ENCODE measurements at regions of chr13 and their contacts with region 1.

Region 1: GRCh38 chr13:106129273-106129672 is 406.2 kb downstream of the EFNB2 start:
- DNase-seq: no peak
- ATAC-seq: no peak
- H3K4me3 Mint-ChIP-seq: no peak overlapping the region
- H3K27ac Mint-ChIP-seq: no peak overlapping the region
- H3K4me1 Mint-ChIP-seq: no peaks in the 10 kb centered on the region
- H3K27me3 Mint-ChIP-seq: peaks cover 2% of the 10 kb centered on the region

Region 2: GRCh38 chr13:105863300-105863920 is 265.9 kb before region 1 on chr13:
- CTCF ChIA-PET with region 1: no interaction called
- POLR2A ChIA-PET with region 1: no interaction called
- intact Hi-C with region 1: loop called in 1 of 2 experiments (anchors 10 kb)
- DNase-seq: no peak
- ATAC-seq: no peak
- H3K4me3 Mint-ChIP-seq: no peak overlapping the region
- H3K27ac Mint-ChIP-seq: no peak overlapping the region
- H3K4me1 Mint-ChIP-seq: no peaks in the 10 kb centered on the region
- H3K27me3 Mint-ChIP-seq: no peaks in the 10 kb centered on the region

Region 3: GRCh38 chr13:106052200-106052767 is 77.0 kb before region 1 on chr13:
- CTCF ChIA-PET with region 1: no interaction called
- POLR2A ChIA-PET with region 1: no interaction called
- intact Hi-C with region 1: no loop called
- DNase-seq: no peak
- ATAC-seq: no peak
- H3K4me3 Mint-ChIP-seq: no peak overlapping the region
- H3K27ac Mint-ChIP-seq: no peak overlapping the region
- H3K4me1 Mint-ChIP-seq: no peaks in the 10 kb centered on the region
- H3K27me3 Mint-ChIP-seq: peaks cover 5% of the 10 kb centered on the region

Region 4: DNA sequence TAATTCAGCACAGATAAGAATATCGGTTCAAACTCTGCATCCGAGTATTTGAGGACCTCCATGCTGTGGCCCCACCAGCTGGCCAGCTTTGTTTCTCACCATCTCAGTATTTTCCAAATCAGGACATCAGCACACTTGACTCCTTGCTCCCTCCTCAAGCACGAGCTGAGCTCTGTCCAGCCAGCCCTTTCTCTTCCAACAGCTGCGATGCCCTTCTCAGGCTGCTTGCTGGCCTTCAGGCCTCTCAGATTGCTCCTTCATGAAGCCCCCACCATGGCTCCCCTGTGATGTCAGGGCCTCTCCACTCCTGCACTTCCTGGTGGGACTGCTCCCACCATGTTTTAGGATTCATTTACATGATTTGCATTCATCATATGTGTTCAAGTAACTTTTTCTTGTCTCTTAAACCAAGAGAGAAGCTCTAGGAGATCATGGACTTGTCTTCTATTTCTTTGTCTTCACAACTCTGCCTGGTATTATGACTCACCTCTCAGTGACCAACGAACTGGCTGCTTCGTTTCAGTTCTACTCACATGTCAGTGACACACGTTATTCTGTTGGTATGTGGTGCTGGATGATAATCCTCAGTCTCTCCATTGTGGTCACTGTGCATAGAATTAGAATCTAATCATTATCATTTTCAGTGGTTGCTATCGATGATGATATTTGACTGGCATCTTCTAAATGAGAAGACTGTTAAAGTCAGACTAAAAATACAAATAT is 65.5 kb before region 1 on chr13:
- CTCF ChIA-PET with region 1: no interaction called
- POLR2A ChIA-PET with region 1: no interaction called
- intact Hi-C with region 1: no loop called
- DNase-seq: no peak
- ATAC-seq: no peak
- H3K4me3 Mint-ChIP-seq: no peak overlapping the region
- H3K27ac Mint-ChIP-seq: no peak overlapping the region
- H3K4me1 Mint-ChIP-seq: no peaks in the 10 kb centered on the region
- H3K27me3 Mint-ChIP-seq: no peaks in the 10 kb centered on the region

Region 5: GRCh38 chr13:106110241-106110855 is 18.9 kb before region 1 on chr13:
- CTCF ChIA-PET with region 1: no interaction called
- POLR2A ChIA-PET with region 1: no interaction called
- intact Hi-C with region 1: no loop called
- DNase-seq: no peak
- ATAC-seq: no peak
- H3K4me3 Mint-ChIP-seq: no peak overlapping the region
- H3K27ac Mint-ChIP-seq: no peak overlapping the region
- H3K4me1 Mint-ChIP-seq: no peaks in the 10 kb centered on the region
- H3K27me3 Mint-ChIP-seq: peaks cover 2% of the 10 kb centered on the region